ENCODE measurements at regions of chr14 and their contacts with region 1.

Region 1: DNA sequence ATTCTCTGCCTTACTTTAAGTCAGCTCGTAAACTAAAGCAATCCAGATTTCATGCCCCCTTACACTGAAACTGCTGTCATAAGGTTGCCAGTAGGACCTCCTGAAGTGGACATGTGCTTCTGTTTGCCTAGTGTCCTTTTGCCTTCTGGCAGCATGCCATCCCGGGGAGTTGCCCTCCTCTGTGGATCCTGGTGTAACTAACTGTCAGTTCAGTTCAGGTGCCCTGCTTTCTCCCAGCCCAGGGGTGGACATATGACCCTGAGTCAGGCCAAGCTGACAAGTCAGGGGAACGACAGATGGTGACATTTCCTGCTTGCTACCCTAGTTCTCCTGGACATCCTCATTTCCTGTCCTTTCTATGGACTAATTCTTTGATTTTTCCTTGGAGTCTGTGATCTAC is 25.6 kb downstream of the AKAP6 start:
- DNase-seq: no peak
- ATAC-seq: no peak
- H3K4me3 ChIP-seq: no peak overlapping the region
- H3K27ac ChIP-seq: no peak overlapping the region
- H3K4me1 ChIP-seq: no peaks in the 10 kb centered on the region
- H3K27me3 ChIP-seq: no peaks in the 10 kb centered on the region
- CTCF ChIP-seq: no peak
- POLR2A ChIP-seq: no peak

Region 2: GRCh38 chr14:31371646-31372045 is 983.1 kb before region 1 on chr14:
- in situ Hi-C with region 1: no loop called
- intact Hi-C with region 1: loop called (anchors 5 kb)
- DNase-seq: no peak
- ATAC-seq: no peak
- H3K4me3 ChIP-seq: no peak overlapping the region
- H3K27ac ChIP-seq: no peak overlapping the region
- H3K4me1 ChIP-seq: no peaks in the 10 kb centered on the region
- H3K27me3 ChIP-seq: no peaks in the 10 kb centered on the region
- CTCF ChIP-seq: no peak
- POLR2A ChIP-seq: no peak

Region 3: GRCh38 chr14:32263939-32264567 is 90.7 kb before region 1 on chr14:
- in situ Hi-C with region 1: no loop called
- intact Hi-C with region 1: no loop called
- DNase-seq: no peak
- ATAC-seq: no peak
- H3K4me3 ChIP-seq: peak overlapping the region in 1 of 4 donors; percentile 6
- H3K27ac ChIP-seq: no peak overlapping the region
- H3K4me1 ChIP-seq: peaks cover 7 to 9% of the 10 kb centered on the region in 2 donors
- H3K27me3 ChIP-seq: no peaks in the 10 kb centered on the region
- CTCF ChIP-seq: no peak
- POLR2A ChIP-seq: no peak

Region 4: GRCh38 chr14:32393118-32393517 is 38.4 kb after region 1 on chr14:
- in situ Hi-C with region 1: no loop called
- intact Hi-C with region 1: no loop called
- DNase-seq: no peak
- ATAC-seq: no peak
- H3K4me3 ChIP-seq: no peak overlapping the region
- H3K27ac ChIP-seq: no peak overlapping the region
- H3K4me1 ChIP-seq: peaks cover 1 to 4% of the 10 kb centered on the region in 2 donors
- H3K27me3 ChIP-seq: no peaks in the 10 kb centered on the region
- CTCF ChIP-seq: no peak
- POLR2A ChIP-seq: no peak

Region 5: GRCh38 chr14:32727832-32728231 is 373.1 kb after region 1 on chr14:
- in situ Hi-C with region 1: no loop called
- intact Hi-C with region 1: no loop called
- DNase-seq: no peak
- ATAC-seq: no peak
- H3K4me3 ChIP-seq: no peak overlapping the region
- H3K27ac ChIP-seq: no peak overlapping the region
- H3K4me1 ChIP-seq: peaks cover 0 to 4% of the 10 kb centered on the region in 2 donors
- H3K27me3 ChIP-seq: no peaks in the 10 kb centered on the region
- CTCF ChIP-seq: no peak
- POLR2A ChIP-seq: no peak